ENCODE measurements at regions of chr16 and their contacts with region 1.

Region 1: DNA sequence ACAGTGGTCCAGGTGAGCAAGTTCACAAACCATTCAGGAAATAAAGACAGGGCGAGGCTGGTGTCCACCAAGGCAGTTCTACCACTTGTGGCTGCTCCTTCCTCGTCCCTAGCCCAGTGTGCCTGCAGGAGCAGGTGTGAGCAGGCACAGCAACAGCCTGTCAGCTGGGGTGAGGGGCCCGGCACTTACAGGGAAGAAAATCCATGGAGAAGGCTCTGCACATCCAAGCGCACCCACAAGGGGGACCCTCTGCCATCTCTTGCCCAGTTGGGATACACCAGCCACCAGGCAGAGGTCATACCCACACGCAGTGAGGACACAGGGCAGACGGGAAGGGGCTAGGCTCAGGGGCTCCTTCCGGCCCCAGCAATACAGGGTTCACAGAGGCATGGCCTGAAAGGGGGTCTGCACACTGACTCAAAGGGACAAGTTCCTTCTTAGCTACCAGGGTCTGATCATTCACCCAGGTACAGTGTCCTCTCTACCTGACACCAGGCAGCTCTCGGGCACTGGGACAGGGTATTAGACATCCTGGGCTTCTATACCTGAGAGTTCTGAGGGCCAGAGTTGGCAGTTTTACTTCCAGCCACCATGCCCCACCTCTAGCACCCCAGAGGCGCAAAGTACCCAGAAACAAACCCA is 27.0 kb downstream of the CDIP1 start:
- DNase-seq: peak; percentile 64 to 74
- H3K4me3 ChIP-seq: no peak overlapping the region
- H3K27ac ChIP-seq: no peak overlapping the region
- H3K4me1 ChIP-seq: no peaks in the 10 kb centered on the region
- H3K27me3 ChIP-seq: no peaks in the 10 kb centered on the region
- CTCF ChIP-seq: peak; percentile 70

Region 2: GRCh38 chr16:4556112-4556511 is 44.5 kb after region 1 on chr16 and contains the start of gene C16orf96:
- CTCF ChIA-PET with region 1: no interaction called
- POLR2A ChIA-PET with region 1: no interaction called
- intact Hi-C with region 1: no loop called
- DNase-seq: peak in 1 of 2 experiments; percentile 18
- H3K4me3 ChIP-seq: no peak within 1 kb of the TSS
- H3K27ac ChIP-seq: no peak within 1 kb of the TSS
- H3K4me1 ChIP-seq: no peaks in the 10 kb centered on the region
- H3K27me3 ChIP-seq: peaks cover 13% of the 10 kb centered on the region; the same call in 1 of the 2 replicates
- CTCF ChIP-seq: no peak
- total RNA-seq, gene C16orf96: 0.13 and 0.15 TPM in 2 replicates

Region 3: GRCh38 chr16:5025171-5025632 is 513.6 kb after region 1 on chr16:
- CTCF ChIA-PET with region 1: no interaction called
- POLR2A ChIA-PET with region 1: no interaction called
- intact Hi-C with region 1: loop called (anchors 2 kb)
- DNase-seq: no peak
- H3K4me3 ChIP-seq: no peak overlapping the region
- H3K27ac ChIP-seq: no peak overlapping the region
- H3K4me1 ChIP-seq: no peaks in the 10 kb centered on the region
- H3K27me3 ChIP-seq: no peaks in the 10 kb centered on the region
- CTCF ChIP-seq: no peak